Natural killer cell (primary cell): ENCODE measurements at regions of chr15 and their contacts with region 1.

Region 1: DNA sequence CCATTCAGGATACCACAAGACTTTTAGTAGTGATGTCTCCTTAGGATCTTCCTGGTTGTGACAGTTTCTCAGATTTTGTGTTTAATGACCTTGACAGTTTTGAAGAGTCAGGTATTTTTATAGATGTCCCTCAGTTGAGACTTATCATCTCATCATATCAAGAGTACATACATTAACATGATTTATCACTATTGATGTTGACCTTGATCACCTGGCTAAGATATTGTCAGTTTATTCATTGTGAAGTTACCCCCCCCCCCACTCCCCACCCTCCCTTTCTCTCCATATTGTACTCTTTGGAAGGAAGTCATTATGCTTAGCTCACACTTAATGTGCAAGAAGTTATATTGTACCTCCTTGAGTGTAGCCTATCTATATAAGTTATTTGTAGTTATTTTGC is 42.9 kb downstream of the MGA start:
- DNase-seq: no peak
- ATAC-seq: no peak
- H3K4me3 ChIP-seq: no peak overlapping the region
- H3K4me3 Mint-ChIP-seq: no peak overlapping the region
- H3K27ac ChIP-seq: no peak overlapping the region
- H3K27ac Mint-ChIP-seq: peak overlapping the region in 1 of 2 donors; percentile 20
- H3K4me1 ChIP-seq: no peaks in the 10 kb centered on the region
- H3K4me1 Mint-ChIP-seq: peaks cover 0 to 6% of the 10 kb centered on the region in 2 donors
- H3K27me3 ChIP-seq: no peaks in the 10 kb centered on the region
- H3K27me3 Mint-ChIP-seq: no peaks in the 10 kb centered on the region
- CTCF ChIP-seq: no peak

Region 2: GRCh38 chr15:41581110-41581509 is 122.0 kb before region 1 on chr15:
- intact Hi-C with region 1: no loop called
- DNase-seq: no peak
- ATAC-seq: no peak
- H3K4me3 ChIP-seq: no peak overlapping the region
- H3K4me3 Mint-ChIP-seq: no peak overlapping the region
- H3K27ac ChIP-seq: no peak overlapping the region
- H3K27ac Mint-ChIP-seq: no peak overlapping the region
- H3K4me1 ChIP-seq: peaks cover 9% of the 10 kb centered on the region
- H3K4me1 Mint-ChIP-seq: peaks cover 10% of the 10 kb centered on the region in 2 donors
- H3K27me3 ChIP-seq: peaks cover 16% of the 10 kb centered on the region
- H3K27me3 Mint-ChIP-seq: peaks cover 14 to 18% of the 10 kb centered on the region in 2 donors
- CTCF ChIP-seq: no peak

Region 3: GRCh38 chr15:41691471-41691870 is 11.6 kb before region 1 on chr15:
- intact Hi-C with region 1: no loop called
- DNase-seq: no peak
- ATAC-seq: no peak
- H3K4me3 ChIP-seq: no peak overlapping the region
- H3K4me3 Mint-ChIP-seq: no peak overlapping the region
- H3K27ac ChIP-seq: no peak overlapping the region
- H3K27ac Mint-ChIP-seq: peak overlapping the region; percentile 36 to 75
- H3K4me1 ChIP-seq: peaks cover 3% of the 10 kb centered on the region
- H3K4me1 Mint-ChIP-seq: peaks cover 59 to 63% of the 10 kb centered on the region in 2 donors
- H3K27me3 ChIP-seq: no peaks in the 10 kb centered on the region
- H3K27me3 Mint-ChIP-seq: no peaks in the 10 kb centered on the region
- CTCF ChIP-seq: no peak

Region 4: GRCh38 chr15:41734079-41734478 is 31.0 kb after region 1 on chr15:
- intact Hi-C with region 1: loop called (anchors 2 kb)
- DNase-seq: no peak
- ATAC-seq: no peak
- H3K4me3 ChIP-seq: no peak overlapping the region
- H3K4me3 Mint-ChIP-seq: no peak overlapping the region
- H3K27ac ChIP-seq: no peak overlapping the region
- H3K27ac Mint-ChIP-seq: no peak overlapping the region
- H3K4me1 ChIP-seq: no peaks in the 10 kb centered on the region
- H3K4me1 Mint-ChIP-seq: no peaks in the 10 kb centered on the region
- H3K27me3 ChIP-seq: no peaks in the 10 kb centered on the region
- H3K27me3 Mint-ChIP-seq: no peaks in the 10 kb centered on the region
- CTCF ChIP-seq: no peak